AG04449 (cell line): ENCODE measurements at regions of chr14 and their contacts with region 1.

Region 1: GRCh38 chr14:72666610-72667009 is 227.3 kb downstream of the DPF3 start:
- DNase-seq: peak; percentile 58
- H3K4me3 ChIP-seq: no peak overlapping the region
- CTCF ChIP-seq: no peak

Region 2: GRCh38 chr14:72678356-72678755 is 11.7 kb after region 1 on chr14:
- CTCF ChIA-PET with region 1: interaction called, 10 read pairs
- POLR2A ChIA-PET with region 1: no interaction called
- DNase-seq: no peak
- H3K4me3 ChIP-seq: no peak overlapping the region
- CTCF ChIP-seq: no peak